Activated CD4-positive, alpha-beta T cell treated with anti-CD3 and anti-CD28 coated beads for 36 hours (primary cell): ENCODE measurements at regions of chr12 and their contacts with region 1.

Region 1: GRCh38 chr12:12724661-12725545 is 7.7 kb downstream of the CDKN1B start:
- DNase-seq: peak; percentile 94
- ATAC-seq: peak; percentile 59
- H3K4me3 Mint-ChIP-seq: peak overlapping the region; percentile 93
- H3K27ac Mint-ChIP-seq: peak overlapping the region; percentile 98
- H3K4me1 Mint-ChIP-seq: peaks cover 45% of the 10 kb centered on the region
- H3K27me3 Mint-ChIP-seq: no peaks in the 10 kb centered on the region

Region 2: DNA sequence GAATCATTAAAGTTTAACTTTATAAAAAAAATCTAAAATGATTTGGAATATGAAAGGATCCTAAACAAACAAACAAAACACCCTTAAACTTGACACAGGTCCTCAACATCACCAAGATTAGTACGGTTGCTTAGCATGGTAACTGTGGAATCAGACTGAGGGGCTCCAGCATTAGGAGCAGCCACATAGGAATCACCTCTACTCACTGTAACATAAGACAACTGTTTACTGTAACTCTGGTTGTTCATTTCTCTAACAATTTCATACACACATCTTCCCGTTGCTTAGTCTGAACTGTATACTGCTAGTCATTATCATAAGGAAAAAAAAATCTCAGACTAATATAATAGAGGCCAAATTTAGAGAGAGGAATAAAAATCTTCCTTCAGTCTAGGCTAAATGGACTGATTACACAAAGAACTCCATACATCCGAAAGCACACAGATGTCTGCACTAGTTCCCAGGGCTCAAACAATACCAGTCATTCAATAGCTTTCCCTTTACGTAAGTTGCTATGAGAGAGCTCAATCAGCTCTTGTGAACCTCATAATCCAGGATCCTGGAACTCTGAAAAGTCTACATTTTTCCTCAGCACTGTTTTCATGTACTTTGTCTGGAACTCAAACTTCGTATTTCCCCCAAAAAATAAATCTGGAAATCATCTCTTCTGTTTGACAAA is 484.1 kb before region 1 on chr12:
- CTCF ChIA-PET with region 1: no interaction called
- POLR2A ChIA-PET with region 1: no interaction called
- intact Hi-C with region 1: no loop called
- DNase-seq: no peak
- ATAC-seq: no peak
- H3K4me3 Mint-ChIP-seq: no peak overlapping the region
- H3K27ac Mint-ChIP-seq: no peak overlapping the region
- H3K4me1 Mint-ChIP-seq: peaks cover 16% of the 10 kb centered on the region
- H3K27me3 Mint-ChIP-seq: no peaks in the 10 kb centered on the region

Region 3: DNA sequence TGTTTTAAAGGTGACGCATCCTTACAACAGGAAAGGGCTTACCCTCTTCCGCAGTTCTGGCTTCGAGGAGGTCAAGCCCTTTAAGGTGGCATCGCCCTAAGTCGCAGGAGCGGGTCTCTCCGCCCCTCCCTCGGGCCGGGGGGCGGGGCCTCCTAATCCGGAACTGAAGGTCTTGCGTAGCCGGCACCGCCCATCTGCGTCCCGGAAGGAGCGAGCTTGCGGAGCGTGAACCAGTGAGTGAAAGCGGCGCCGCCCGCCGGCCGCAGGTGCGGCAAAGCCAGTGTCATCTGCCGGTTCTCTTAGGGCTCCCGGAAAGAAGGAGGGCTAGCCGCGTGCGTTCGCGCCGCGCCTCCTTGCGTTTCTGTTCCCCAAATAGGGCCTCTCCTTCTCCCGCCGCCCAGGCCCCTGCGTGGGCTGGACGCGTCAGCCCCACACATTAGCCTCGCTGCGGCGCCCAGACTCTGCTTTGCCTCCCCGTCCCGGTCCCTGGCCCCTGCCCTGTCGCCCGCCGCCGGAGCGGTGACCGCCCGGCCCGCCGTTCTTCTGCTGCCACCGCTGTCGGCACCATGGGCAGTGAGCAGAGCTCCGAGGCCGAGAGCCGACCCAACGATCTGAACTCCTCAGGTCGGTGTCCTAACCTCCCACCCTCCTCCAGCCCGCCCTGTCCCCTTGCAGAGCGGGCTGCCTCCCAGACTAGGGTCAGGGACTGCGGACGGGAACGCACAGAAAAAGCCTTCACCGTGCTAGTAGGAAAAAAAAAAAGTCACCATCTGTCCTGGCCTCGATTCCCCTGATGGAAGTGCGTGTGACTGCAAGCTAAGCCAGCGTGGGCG is 367.8 kb before region 1 on chr12 and contains the start of gene BORCS5:
- CTCF ChIA-PET with region 1: interaction called, 3 read pairs
- POLR2A ChIA-PET with region 1: interaction called, 9 read pairs
- intact Hi-C with region 1: loop called (anchors 1 kb)
- DNase-seq: peak; percentile 99
- ATAC-seq: peak; percentile 94
- H3K4me3 Mint-ChIP-seq: peak within 1 kb of the TSS; percentile 98
- H3K27ac Mint-ChIP-seq: peak within 1 kb of the TSS; percentile 99
- H3K4me1 Mint-ChIP-seq: peaks cover 38% of the 10 kb centered on the region
- H3K27me3 Mint-ChIP-seq: no peaks in the 10 kb centered on the region
- total RNA-seq, gene BORCS5: 41.8 to 45.0 TPM

Region 4: DNA sequence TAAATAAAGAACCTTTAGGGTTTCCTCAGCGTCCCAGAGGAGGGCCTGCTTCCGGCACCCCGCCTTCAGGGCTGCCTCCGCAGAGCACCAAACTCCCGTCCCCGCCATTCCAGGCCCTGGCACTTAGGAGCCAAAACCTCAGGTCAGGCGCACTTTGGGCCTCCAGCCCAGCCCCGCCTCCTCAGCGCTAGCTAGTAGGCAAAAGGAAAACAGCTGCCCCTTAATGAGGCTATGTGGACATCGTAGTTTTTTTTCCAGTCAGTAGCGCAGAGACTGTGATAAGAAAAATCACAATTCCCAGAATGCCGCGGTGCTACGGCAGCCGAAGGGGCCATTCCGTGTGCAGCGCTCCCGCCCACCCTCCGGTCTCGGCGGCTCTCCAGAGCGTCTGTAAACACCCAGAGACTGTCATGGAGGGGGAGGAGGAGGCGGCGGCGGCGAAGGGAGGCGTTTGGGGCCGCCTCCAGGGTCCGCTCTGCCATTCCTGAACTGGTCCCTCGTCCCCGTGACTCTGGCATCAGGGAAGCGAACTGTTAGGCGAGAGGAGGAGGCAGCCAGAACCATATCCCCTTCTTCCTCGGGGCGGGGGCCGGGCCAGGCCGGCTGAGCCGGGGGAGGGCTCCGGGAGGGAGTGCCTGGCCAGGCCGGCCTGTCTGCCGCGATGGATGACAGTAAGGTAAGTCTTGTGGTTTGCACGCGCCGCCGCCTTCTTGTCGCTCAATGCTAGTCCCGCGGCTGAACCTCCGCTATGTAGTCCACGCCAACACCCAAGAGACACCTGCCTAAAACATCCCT is 113.2 kb before region 1 on chr12 and contains the start of gene CREBL2:
- CTCF ChIA-PET with region 1: no interaction called
- POLR2A ChIA-PET with region 1: no interaction called
- intact Hi-C with region 1: loop called in 1 of 2 experiments (anchors 2 kb)
- DNase-seq: peak; percentile 92
- ATAC-seq: peak; percentile 77
- H3K4me3 Mint-ChIP-seq: peak within 1 kb of the TSS; percentile 93
- H3K27ac Mint-ChIP-seq: peak within 1 kb of the TSS; percentile 98
- H3K4me1 Mint-ChIP-seq: peaks cover 68% of the 10 kb centered on the region
- H3K27me3 Mint-ChIP-seq: no peaks in the 10 kb centered on the region
- total RNA-seq, gene CREBL2: 16.8 to 20.2 TPM

Region 5: DNA sequence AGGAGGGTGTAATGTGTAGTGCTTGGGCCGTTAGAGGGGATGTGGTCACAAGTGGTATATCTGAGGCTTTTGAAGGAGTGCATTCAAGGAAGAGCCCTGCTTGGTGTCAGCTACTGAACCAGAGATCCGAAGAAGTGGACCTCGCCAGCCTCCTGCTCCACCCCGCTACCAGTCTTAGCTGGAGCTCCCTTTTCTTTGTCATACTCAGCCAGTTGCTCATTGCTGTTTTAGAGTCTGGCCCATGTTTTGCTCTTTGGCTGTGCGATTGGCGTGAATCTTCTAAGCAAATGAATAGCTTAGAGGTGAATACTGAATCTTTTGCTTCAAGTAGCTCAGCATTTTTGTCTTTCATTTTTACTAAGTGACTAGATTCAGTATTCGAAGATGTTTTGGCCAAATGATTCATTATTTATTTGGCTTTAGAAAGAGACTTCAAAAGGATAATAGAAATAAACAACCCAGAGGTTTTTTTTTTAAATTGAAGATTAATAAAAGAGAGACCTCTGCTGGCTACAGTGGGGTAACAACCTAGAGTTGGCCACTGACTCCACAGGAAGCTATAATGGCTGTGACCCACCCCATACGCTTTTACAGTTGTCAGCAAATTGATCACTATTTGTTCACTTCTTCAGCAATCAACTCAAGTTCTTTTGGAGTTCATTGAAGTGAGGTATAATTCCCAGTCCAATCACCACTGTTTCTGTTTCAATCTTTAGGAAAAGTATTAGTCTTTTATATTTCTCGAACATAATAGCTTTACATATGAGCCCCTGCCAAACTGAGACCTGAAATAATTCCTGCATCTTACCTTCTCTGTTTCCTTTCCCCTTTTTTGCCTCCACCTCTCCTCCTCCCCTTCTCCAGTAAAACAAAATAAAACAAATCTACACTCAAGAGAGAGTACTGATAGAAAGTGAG is 12.1 kb after region 1 on chr12:
- CTCF ChIA-PET with region 1: interaction called, 53 read pairs
- POLR2A ChIA-PET with region 1: interaction called, 38 read pairs
- intact Hi-C with region 1: loop called in 1 of 2 experiments (anchors 1 kb)
- DNase-seq: peak; percentile 65
- ATAC-seq: peak; percentile 87
- H3K4me3 Mint-ChIP-seq: peak overlapping the region; percentile 32
- H3K27ac Mint-ChIP-seq: peak overlapping the region; percentile 75
- H3K4me1 Mint-ChIP-seq: peaks cover 35% of the 10 kb centered on the region
- H3K27me3 Mint-ChIP-seq: no peaks in the 10 kb centered on the region

Region 6: DNA sequence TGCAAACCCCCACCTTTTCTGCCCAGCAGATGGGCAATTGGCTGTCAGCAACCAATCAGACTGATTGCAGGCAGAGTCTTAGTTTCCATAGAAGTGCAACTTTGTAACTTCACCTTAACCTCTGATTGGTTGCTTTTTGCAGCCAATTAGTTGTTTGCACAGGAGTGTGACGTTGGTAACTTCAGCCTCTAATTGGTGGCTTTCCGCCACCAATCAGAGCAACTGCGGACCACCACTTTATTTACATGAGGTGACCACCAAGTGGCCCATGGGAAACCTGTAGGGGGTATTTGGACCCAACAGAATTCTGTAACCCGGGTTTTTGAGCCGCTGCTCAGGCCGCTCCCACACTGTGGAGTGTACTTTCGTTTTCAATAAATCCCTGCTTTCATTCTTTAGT is 24.5 kb after region 1 on chr12:
- CTCF ChIA-PET with region 1: no interaction called
- POLR2A ChIA-PET with region 1: no interaction called
- intact Hi-C with region 1: no loop called
- DNase-seq: no peak
- ATAC-seq: no peak
- H3K4me3 Mint-ChIP-seq: no peak overlapping the region
- H3K27ac Mint-ChIP-seq: no peak overlapping the region
- H3K4me1 Mint-ChIP-seq: no peaks in the 10 kb centered on the region
- H3K27me3 Mint-ChIP-seq: no peaks in the 10 kb centered on the region

Region 7: GRCh38 chr12:12813120-12814101 is 88.5 kb after region 1 on chr12 and contains the start of gene DDX47:
- CTCF ChIA-PET with region 1: no interaction called
- POLR2A ChIA-PET with region 1: interaction called, 4 read pairs
- intact Hi-C with region 1: loop called in 1 of 2 experiments (anchors 1 kb)
- DNase-seq: peak; percentile 99
- ATAC-seq: peak; percentile 90
- H3K4me3 Mint-ChIP-seq: peak within 1 kb of the TSS; percentile 95
- H3K27ac Mint-ChIP-seq: peak within 1 kb of the TSS; percentile 91
- H3K4me1 Mint-ChIP-seq: peaks cover 61% of the 10 kb centered on the region
- H3K27me3 Mint-ChIP-seq: no peaks in the 10 kb centered on the region
- total RNA-seq, gene DDX47: 91.3 to 91.9 TPM

Region 8: DNA sequence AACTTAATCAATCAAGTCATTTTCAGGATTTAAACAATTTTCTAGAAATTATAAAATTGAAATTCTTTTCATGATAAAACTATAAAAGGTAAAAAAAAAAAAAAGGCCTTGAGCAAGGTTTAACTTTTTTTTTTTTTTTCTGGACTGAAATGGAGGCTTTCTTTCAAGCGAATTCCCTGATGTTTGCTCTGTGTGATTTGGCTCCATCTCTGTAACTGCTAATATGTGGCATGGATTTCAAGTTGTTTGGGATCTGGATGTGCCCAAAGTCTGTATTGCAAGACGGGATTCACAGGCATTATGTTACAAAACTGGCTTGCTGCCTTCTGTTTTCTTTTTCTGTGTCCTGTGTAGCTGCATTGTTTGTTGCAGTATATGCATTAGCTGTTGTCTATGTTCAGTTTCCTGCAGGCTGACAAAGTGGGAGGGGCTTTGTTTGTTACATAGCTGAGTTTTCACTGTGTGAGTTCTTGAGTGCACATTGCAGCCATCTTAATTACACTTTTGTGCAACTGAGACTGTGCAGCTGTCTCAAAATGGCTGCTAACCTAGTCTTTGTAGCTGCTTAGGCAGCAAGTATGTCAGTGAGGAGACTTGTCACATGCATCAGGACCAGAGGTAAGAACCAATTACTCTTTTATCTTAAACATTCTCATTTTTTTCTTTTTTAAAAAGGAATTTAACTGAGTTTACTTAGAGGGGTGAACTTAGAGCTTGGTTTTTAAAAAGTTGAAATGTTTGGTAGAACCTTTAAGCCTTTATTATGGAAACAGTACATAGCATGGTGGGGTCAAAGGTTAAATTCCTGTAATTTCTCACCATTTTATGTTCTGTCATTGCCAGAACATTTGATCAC is 1660.1 kb after region 1 on chr12:
- CTCF ChIA-PET with region 1: no interaction called
- POLR2A ChIA-PET with region 1: no interaction called
- intact Hi-C with region 1: loop called in 1 of 2 experiments (anchors 5 kb)
- DNase-seq: peak; percentile 75
- ATAC-seq: peak; percentile 96
- H3K4me3 Mint-ChIP-seq: peak overlapping the region; percentile 73
- H3K27ac Mint-ChIP-seq: peak overlapping the region; percentile 94
- H3K4me1 Mint-ChIP-seq: peaks cover 59% of the 10 kb centered on the region
- H3K27me3 Mint-ChIP-seq: no peaks in the 10 kb centered on the region